HEK293 (cell line): ENCODE measurements at regions of chr10 and their contacts with region 1.

Region 1: GRCh38 chr10:62437696-62438095 is 63.5 kb downstream of the ZNF365 start:
- H3K4me3 ChIP-seq: no peak overlapping the region
- H3K27ac ChIP-seq: no peak overlapping the region
- H3K4me1 ChIP-seq: no peaks in the 10 kb centered on the region
- CTCF ChIP-seq: peak; percentile 55

Region 2: GRCh38 chr10:61869774-61870525 is 567.7 kb before region 1 on chr10:
- CTCF ChIA-PET with region 1: no interaction called
- POLR2A ChIA-PET with region 1: no interaction called
- H3K4me3 ChIP-seq: no peak overlapping the region
- H3K27ac ChIP-seq: no peak overlapping the region
- H3K4me1 ChIP-seq: peaks cover 3% of the 10 kb centered on the region; the same call in 1 of the 2 replicates
- CTCF ChIP-seq: no peak

Region 3: DNA sequence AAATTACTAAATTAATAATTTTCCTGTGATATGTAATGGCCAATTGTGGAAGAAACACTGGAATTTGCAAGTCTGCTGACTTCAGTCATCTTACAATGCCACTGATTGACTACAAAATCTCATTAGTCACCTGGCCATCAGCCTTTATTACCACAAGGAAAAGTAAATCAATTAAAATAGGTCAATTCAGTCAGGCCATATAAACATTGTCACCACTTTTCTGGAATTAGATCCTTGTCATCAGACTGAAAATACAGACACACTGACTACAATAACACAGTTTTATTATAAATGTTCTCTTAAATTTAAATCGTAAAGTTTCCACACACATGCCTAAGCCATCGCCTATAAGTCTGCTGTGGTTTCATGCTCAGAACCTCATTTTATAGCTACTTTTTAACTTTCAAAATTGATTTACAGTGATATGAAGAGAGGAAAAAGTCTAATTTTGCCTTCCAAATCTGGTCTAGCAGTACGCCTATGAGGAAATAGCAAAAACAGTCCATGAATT is 223.3 kb before region 1 on chr10:
- CTCF ChIA-PET with region 1: no interaction called
- POLR2A ChIA-PET with region 1: no interaction called
- H3K4me3 ChIP-seq: no peak overlapping the region
- H3K27ac ChIP-seq: no peak overlapping the region
- H3K4me1 ChIP-seq: no peaks in the 10 kb centered on the region; the same call in 1 of the 2 replicates
- CTCF ChIP-seq: no peak

Region 4: GRCh38 chr10:62264702-62265436 is 172.8 kb before region 1 on chr10:
- CTCF ChIA-PET with region 1: interaction called, 16 read pairs
- POLR2A ChIA-PET with region 1: no interaction called
- H3K4me3 ChIP-seq: no peak overlapping the region
- H3K27ac ChIP-seq: no peak overlapping the region
- H3K4me1 ChIP-seq: peaks cover 9% of the 10 kb centered on the region
- CTCF ChIP-seq: 0 out of 2 replicates have a peak, but pooled peaks have one; percentile 27

Region 5: DNA sequence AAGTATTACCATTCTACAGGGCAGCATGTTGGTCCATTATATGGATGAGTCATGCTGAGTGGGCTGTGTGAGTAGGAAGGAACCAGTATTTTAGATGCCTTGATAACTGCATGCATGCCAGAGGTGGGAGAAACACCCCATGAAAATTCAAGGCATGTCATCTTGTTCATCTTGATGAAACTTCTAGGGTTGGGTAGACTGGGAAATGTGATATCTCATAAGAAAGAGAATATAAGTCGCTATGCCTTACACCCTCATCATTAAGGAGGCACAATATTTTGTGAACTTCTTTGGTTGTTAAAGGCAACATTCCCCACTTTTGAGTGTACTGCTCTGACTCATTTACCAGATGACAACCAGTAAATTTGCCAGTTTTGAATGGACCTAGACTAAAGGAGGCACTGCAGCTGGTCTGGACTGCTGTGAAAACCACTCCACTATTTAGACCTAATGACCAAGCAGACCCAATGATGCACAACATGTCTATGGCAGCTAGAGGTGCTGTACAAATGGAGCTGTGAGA is 15.6 kb before region 1 on chr10:
- CTCF ChIA-PET with region 1: interaction called, 10 read pairs
- POLR2A ChIA-PET with region 1: no interaction called
- H3K4me3 ChIP-seq: no peak overlapping the region
- H3K27ac ChIP-seq: no peak overlapping the region
- H3K4me1 ChIP-seq: no peaks in the 10 kb centered on the region
- CTCF ChIP-seq: no peak

Region 6: DNA sequence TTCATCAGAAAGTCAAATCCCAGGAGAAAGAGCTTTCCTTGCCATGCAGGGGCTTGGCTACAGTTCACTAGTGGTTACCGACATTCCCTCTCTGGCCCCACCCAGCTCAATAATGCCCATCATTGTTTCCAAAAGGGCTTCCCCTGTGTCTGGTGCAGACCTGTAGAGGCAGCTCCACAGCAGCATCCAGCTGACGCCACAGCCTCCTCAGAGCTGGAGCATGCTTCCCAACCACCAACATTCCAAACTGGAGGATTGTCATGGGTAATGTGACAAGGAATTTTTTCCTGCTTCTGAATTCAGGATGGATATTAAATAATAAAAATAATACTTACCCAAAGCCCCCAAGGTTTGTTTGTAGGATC is 13.9 kb after region 1 on chr10:
- CTCF ChIA-PET with region 1: interaction called, 15 read pairs
- POLR2A ChIA-PET with region 1: no interaction called
- H3K4me3 ChIP-seq: no peak overlapping the region
- H3K27ac ChIP-seq: no peak overlapping the region
- H3K4me1 ChIP-seq: no peaks in the 10 kb centered on the region
- CTCF ChIP-seq: no peak

Region 7: GRCh38 chr10:62492012-62492869 is 54.5 kb after region 1 on chr10:
- CTCF ChIA-PET with region 1: interaction called, 10 read pairs
- POLR2A ChIA-PET with region 1: no interaction called
- H3K4me3 ChIP-seq: no peak overlapping the region
- H3K27ac ChIP-seq: no peak overlapping the region
- H3K4me1 ChIP-seq: no peaks in the 10 kb centered on the region
- CTCF ChIP-seq: peak; percentile 44; the same call in 1 of the 2 replicates

Region 8: GRCh38 chr10:62769574-62770242 is 332.0 kb after region 1 on chr10:
- CTCF ChIA-PET with region 1: no interaction called
- POLR2A ChIA-PET with region 1: no interaction called
- H3K4me3 ChIP-seq: no peak overlapping the region
- H3K27ac ChIP-seq: no peak overlapping the region
- H3K4me1 ChIP-seq: no peaks in the 10 kb centered on the region
- CTCF ChIP-seq: no peak

Region 9: DNA sequence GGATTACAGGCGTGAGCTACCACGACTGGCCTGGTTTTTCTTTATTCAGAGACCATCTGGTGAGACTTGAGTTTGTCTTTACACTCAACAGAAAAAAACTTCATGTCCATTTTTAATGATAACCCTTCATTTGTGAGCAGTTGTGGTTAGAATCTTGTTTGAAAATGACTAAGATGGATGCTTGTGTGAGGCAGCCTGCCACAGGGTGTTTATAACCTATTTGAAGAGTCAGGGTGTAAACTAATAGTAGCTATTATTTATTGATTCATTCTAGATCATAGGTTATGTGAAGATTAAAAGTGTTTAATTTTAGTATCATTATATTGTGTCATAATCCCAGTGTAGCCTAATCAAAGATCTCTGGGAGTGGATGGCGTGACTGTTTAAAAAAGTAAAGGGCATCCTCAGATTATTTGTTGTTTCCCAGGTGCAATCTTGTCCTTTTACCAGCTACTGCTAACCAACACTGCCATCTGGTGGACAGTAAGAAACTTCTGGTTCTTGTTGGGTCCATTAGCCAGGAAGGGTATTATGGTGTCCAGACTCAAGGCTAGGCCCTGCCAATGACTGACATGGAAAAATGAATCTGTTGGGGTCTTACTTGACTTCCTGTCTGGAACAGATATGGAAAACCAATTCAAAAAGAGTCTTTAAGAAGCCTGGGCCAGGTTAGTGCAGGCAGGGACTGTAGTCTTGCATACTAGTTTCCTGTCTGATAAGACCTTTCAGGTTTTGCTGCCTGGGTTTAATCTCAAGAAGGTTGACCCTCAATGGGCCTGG is 720.3 kb after region 1 on chr10:
- CTCF ChIA-PET with region 1: interaction called, 29 read pairs
- POLR2A ChIA-PET with region 1: no interaction called
- H3K4me3 ChIP-seq: no peak overlapping the region
- H3K27ac ChIP-seq: no peak overlapping the region
- H3K4me1 ChIP-seq: no peaks in the 10 kb centered on the region
- CTCF ChIP-seq: peak; percentile 43; the same call in 1 of the 2 replicates